ENCODE measurements at regions of chrX and their contacts with region 1.

Region 1: GRCh38 chrX:114611018-114611619 is 27.2 kb downstream of the HTR2C start:
- DNase-seq: no peak
- ATAC-seq: no peak

Region 2: DNA sequence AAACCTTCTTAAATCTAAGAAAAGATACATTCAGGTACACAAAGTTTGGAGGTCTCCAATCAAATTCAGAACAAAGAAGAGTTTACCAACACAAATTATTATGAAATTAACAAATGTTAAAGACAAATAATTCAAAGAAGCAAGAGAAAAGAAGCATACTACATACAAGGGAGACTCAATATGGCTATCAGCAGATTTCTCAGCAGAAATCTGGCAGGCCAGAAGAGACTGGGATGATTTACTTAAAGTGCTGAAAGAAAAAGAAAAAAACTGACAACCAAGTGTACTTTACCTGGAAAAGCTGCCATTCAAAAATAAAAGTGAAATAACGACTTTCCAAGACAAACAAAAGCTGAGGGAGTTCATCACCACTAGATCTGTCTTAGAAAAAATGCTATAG is 91.6 kb before region 1 on chrX:
- intact Hi-C with region 1: no loop called
- DNase-seq: no peak
- ATAC-seq: no peak

Region 3: DNA sequence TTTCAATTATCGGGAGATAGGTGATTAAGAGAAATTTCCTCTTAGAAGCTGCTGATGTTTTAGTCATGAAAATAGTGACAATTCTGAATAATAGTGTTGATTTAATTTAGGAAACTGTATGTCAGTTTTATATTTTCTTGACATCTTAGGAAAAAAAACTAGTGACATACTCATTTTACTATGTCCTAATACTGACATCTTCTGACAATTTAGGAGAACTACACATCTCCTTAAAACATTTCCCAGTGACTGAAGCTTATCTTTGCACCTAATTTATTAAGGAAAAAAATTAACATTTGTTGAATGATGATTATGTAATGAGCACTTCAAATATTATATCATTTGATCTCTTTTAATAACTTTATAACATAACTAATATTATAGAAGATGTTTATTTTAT is 536.1 kb after region 1 on chrX:
- intact Hi-C with region 1: loop called (anchors 10 kb)
- DNase-seq: no peak
- ATAC-seq: no peak